Caco-2 (cell line): ENCODE measurements at regions of chr7 and their contacts with region 1.

Region 1: GRCh38 chr7:26046150-26046549 is 105.8 kb upstream of the NFE2L3 start:
- DNase-seq: no peak
- H3K4me3 ChIP-seq: no peak overlapping the region
- H3K4me3 Mint-ChIP-seq: no peak overlapping the region
- H3K27ac Mint-ChIP-seq: no peak overlapping the region
- H3K4me1 ChIP-seq: peaks cover 16% of the 10 kb centered on the region
- H3K4me1 Mint-ChIP-seq: peaks cover 8% of the 10 kb centered on the region
- H3K27me3 ChIP-seq: no peaks in the 10 kb centered on the region
- H3K27me3 Mint-ChIP-seq: no peaks in the 10 kb centered on the region
- CTCF ChIP-seq: no peak

Region 2: GRCh38 chr7:25777969-25778708 is 268.0 kb before region 1 on chr7:
- CTCF ChIA-PET with region 1: no interaction called
- POLR2A ChIA-PET with region 1: no interaction called
- intact Hi-C with region 1: no loop called
- DNase-seq: no peak
- H3K4me3 ChIP-seq: no peak overlapping the region
- H3K4me3 Mint-ChIP-seq: no peak overlapping the region
- H3K27ac Mint-ChIP-seq: no peak overlapping the region
- H3K4me1 ChIP-seq: no peaks in the 10 kb centered on the region
- H3K4me1 Mint-ChIP-seq: no peaks in the 10 kb centered on the region
- H3K27me3 ChIP-seq: no peaks in the 10 kb centered on the region
- H3K27me3 Mint-ChIP-seq: peaks cover 6% of the 10 kb centered on the region
- CTCF ChIP-seq: no peak

Region 3: DNA sequence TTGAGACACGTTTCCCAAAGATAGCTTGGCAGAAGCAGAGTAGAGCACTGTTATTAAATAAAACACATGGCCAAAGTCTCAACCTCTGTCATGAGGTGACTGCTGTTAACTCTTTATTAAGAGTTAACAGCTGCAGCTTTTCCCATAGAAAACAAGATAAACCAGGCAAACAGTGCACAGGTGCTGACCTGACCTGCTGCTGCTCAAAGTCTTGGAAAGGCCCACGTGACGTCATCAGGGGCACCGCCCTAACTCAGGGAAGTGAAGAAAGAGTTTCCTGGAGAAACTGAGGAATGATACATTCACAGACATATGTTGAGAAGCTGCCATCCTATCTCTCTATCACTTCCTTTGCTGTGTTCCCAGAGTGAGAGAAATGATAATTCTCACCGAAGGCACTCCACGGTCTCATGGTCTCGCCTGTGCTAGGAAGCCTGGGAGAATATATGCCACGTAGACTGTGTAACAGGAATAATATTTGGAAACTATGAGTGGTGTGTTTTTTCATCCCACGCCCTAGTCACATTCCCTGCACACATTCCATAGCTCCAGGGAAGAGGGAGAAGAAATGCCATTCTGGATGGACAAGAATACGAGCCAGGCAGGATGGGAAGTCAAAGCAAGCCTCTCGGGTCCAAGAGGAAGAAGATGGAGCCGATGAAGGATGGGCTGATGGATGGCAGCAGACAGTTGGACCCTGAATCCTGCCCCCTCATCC is 40.3 kb before region 1 on chr7:
- CTCF ChIA-PET with region 1: interaction called, 5 read pairs
- POLR2A ChIA-PET with region 1: no interaction called
- intact Hi-C with region 1: loop called (anchors 5 kb)
- DNase-seq: peak; percentile 51 to 75
- H3K4me3 ChIP-seq: no peak overlapping the region
- H3K4me3 Mint-ChIP-seq: peak overlapping the region; percentile 45
- H3K27ac Mint-ChIP-seq: peak overlapping the region; percentile 86
- H3K4me1 ChIP-seq: peaks cover 61% of the 10 kb centered on the region
- H3K4me1 Mint-ChIP-seq: peaks cover 42% of the 10 kb centered on the region
- H3K27me3 ChIP-seq: no peaks in the 10 kb centered on the region
- H3K27me3 Mint-ChIP-seq: no peaks in the 10 kb centered on the region
- CTCF ChIP-seq: no peak